Natural killer cell (primary cell): ENCODE measurements at regions of chr20 and their contacts with region 1.

Region 1: DNA sequence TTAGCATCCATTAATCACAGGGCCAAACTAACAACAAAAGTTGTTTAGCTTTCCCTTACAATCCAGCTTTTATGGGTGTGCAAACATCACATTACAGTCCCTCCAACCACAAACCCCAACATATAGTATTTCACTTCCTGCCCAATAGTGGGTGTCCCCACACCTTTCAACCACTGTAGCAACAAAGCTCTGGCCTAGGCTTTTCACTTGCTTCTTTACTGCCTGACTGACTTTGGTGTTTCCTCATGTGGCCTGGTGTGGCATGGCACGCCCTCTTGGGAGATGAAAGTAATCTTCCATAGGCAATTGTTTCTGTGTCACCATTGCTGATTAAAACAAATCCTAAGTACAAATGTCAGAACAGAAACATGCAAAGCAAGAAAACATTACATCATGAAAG is 46.3 kb downstream of the MCM8 start:
- DNase-seq: peak; percentile 62 to 80
- ATAC-seq: peak; percentile 97 to 99 (median 98)
- H3K4me3 ChIP-seq: no peak overlapping the region
- H3K4me3 Mint-ChIP-seq: peak overlapping the region; percentile 87
- H3K27ac ChIP-seq: peak overlapping the region; percentile 54
- H3K27ac Mint-ChIP-seq: peak overlapping the region; percentile 71 to 81
- H3K4me1 ChIP-seq: peaks cover 27% of the 10 kb centered on the region
- H3K4me1 Mint-ChIP-seq: peaks cover 36 to 44% of the 10 kb centered on the region in 2 donors
- H3K27me3 ChIP-seq: no peaks in the 10 kb centered on the region
- H3K27me3 Mint-ChIP-seq: no peaks in the 10 kb centered on the region
- CTCF ChIP-seq: no peak

Region 2: GRCh38 chr20:5569021-5569420 is 427.7 kb before region 1 on chr20:
- intact Hi-C with region 1: loop called (anchors 5 kb)
- DNase-seq: peak in 1 of 2 donors; percentile 76
- ATAC-seq: peak; percentile 81 to 95 (median 82)
- H3K4me3 ChIP-seq: no peak overlapping the region
- H3K4me3 Mint-ChIP-seq: no peak overlapping the region
- H3K27ac ChIP-seq: no peak overlapping the region
- H3K27ac Mint-ChIP-seq: peak overlapping the region; percentile 53 to 65
- H3K4me1 ChIP-seq: no peaks in the 10 kb centered on the region
- H3K4me1 Mint-ChIP-seq: peaks cover 11 to 23% of the 10 kb centered on the region in 2 donors
- H3K27me3 ChIP-seq: no peaks in the 10 kb centered on the region
- H3K27me3 Mint-ChIP-seq: no peaks in the 10 kb centered on the region
- CTCF ChIP-seq: peak; percentile 64

Region 3: DNA sequence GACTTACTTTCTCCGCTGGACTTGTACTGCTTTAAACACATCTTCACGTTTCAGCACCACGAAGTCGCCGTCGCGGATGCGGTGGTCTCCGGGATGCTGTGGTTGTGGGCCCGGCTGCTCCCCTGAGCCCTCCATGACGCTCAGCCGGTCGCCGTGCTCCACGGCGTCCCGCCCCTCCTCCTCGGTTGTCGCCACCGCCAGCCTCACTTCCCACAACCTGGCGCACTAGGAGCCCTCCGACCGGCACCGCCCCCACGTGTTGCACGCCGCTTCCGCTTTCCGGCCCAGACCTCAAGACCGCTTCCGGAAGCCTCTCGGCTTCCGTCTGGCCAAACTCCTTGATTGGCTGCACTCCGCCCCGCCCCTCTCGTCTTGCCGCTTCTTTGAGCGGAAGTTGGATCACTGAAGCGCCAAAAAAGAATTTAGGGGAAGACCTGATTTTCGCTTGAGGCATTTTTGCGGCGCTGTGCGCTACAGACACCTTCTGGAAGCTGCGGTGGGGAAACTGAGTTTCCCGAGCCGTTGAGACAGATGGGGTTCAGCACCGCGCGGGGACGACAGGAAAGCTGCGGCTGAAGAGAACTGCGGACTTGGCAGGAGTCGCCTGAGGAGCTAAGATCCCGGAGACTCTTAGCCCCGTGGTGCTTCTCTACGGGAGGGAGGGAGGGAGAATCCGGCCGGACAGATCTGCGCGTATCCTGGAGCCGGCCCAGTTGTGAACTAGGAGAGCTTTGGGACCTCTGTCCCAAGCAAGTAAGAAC is 46.3 kb before region 1 on chr20 and contains the starts of genes MCM8 and TRMT6:
- intact Hi-C with region 1: loop called (anchors 1 kb)
- DNase-seq: peak; percentile 95 to 97
- ATAC-seq: peak; percentile 95 to 98 (median 97)
- H3K4me3 ChIP-seq: peak within 1 kb of the TSS; percentile 72
- H3K4me3 Mint-ChIP-seq: peak within 1 kb of the TSS; percentile 98
- H3K27ac ChIP-seq: peak within 1 kb of the TSS; percentile 62
- H3K27ac Mint-ChIP-seq: peak within 1 kb of the TSS; percentile 90 to 95
- H3K4me1 ChIP-seq: peaks cover 24% of the 10 kb centered on the region
- H3K4me1 Mint-ChIP-seq: peaks cover 41 to 43% of the 10 kb centered on the region in 2 donors
- H3K27me3 ChIP-seq: no peaks in the 10 kb centered on the region
- H3K27me3 Mint-ChIP-seq: no peaks in the 10 kb centered on the region
- CTCF ChIP-seq: no peak
- total RNA-seq, gene MCM8: 8.1 to 14.3 (median 9.0) TPM
- total RNA-seq, gene TRMT6: 9.2 to 13.0 (median 9.9) TPM

Region 4: DNA sequence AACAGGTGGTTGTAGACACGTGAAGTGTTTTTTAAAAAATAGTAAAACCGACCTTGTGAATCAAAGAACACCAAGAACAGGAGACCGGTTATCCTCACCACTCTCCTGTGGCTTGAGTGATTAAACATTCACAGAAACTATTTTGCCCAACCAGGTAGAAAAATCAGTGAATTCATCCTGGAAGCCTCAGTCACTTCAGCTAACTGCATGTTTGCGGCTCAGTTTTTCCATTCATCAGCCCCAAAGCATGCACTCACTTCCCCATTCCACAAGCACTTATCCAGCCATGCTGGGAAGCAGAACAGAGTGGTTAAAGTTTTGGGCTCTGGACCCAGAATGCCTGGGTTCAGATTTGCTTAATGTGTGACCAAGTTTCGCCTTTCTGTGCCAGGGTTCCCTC is 54.7 kb after region 1 on chr20:
- intact Hi-C with region 1: no loop called
- DNase-seq: no peak
- ATAC-seq: no peak
- H3K4me3 ChIP-seq: no peak overlapping the region
- H3K4me3 Mint-ChIP-seq: no peak overlapping the region
- H3K27ac ChIP-seq: no peak overlapping the region
- H3K27ac Mint-ChIP-seq: no peak overlapping the region
- H3K4me1 ChIP-seq: no peaks in the 10 kb centered on the region
- H3K4me1 Mint-ChIP-seq: peaks cover 10 to 14% of the 10 kb centered on the region in 2 donors
- H3K27me3 ChIP-seq: peaks cover 13% of the 10 kb centered on the region
- H3K27me3 Mint-ChIP-seq: peaks cover 20 to 24% of the 10 kb centered on the region in 2 donors
- CTCF ChIP-seq: no peak

Region 5: GRCh38 chr20:6074145-6074561 is 77.4 kb after region 1 on chr20:
- intact Hi-C with region 1: no loop called
- DNase-seq: peak in 1 of 2 donors; percentile 32
- ATAC-seq: peak in 1 of 3 donors; percentile 48
- H3K4me3 ChIP-seq: no peak overlapping the region
- H3K4me3 Mint-ChIP-seq: no peak overlapping the region
- H3K27ac ChIP-seq: no peak overlapping the region
- H3K27ac Mint-ChIP-seq: no peak overlapping the region
- H3K4me1 ChIP-seq: no peaks in the 10 kb centered on the region
- H3K4me1 Mint-ChIP-seq: peaks cover 5 to 6% of the 10 kb centered on the region in 2 donors
- H3K27me3 ChIP-seq: no peaks in the 10 kb centered on the region
- H3K27me3 Mint-ChIP-seq: no peaks in the 10 kb centered on the region
- CTCF ChIP-seq: no peak